ENCODE measurements at regions of chr20 and their contacts with region 1.

Region 1: GRCh38 chr20:22861229-22861980 is 173.7 kb upstream of the SSTR4 start:
- DNase-seq: no peak
- ATAC-seq: no peak
- H3K4me3 Mint-ChIP-seq: no peak overlapping the region
- H3K27ac Mint-ChIP-seq: no peak overlapping the region
- H3K4me1 Mint-ChIP-seq: no peaks in the 10 kb centered on the region
- H3K27me3 Mint-ChIP-seq: peaks cover 2% of the 10 kb centered on the region

Region 2: GRCh38 chr20:22918286-22918983 is 57.0 kb after region 1 on chr20:
- CTCF ChIA-PET with region 1: no interaction called
- POLR2A ChIA-PET with region 1: no interaction called
- intact Hi-C with region 1: loop called in 1 of 2 experiments (anchors 10 kb)
- DNase-seq: no peak
- ATAC-seq: no peak
- H3K4me3 Mint-ChIP-seq: no peak overlapping the region
- H3K27ac Mint-ChIP-seq: no peak overlapping the region
- H3K4me1 Mint-ChIP-seq: peaks cover 4% of the 10 kb centered on the region
- H3K27me3 Mint-ChIP-seq: peaks cover 8% of the 10 kb centered on the region

Measured in activated CD4-positive, alpha-beta T cell treated with anti-CD3 and anti-CD28 coated beads for 36 hours (primary cell).